CD4-positive, alpha-beta memory T cell (primary cell): ENCODE measurements at regions of chr12 and their contacts with region 1.

Region 1: GRCh38 chr12:47949441-47950308 is 13.7 kb upstream of the TMEM106C start:
- DNase-seq: peak in 4 of 5 donors; percentile 28 to 38 (median 34)
- H3K4me3 ChIP-seq: no peak overlapping the region
- H3K4me3 Mint-ChIP-seq: no peak overlapping the region
- H3K27ac ChIP-seq: no peak overlapping the region
- H3K27ac Mint-ChIP-seq: no peak overlapping the region
- H3K4me1 ChIP-seq: no peaks in the 10 kb centered on the region
- H3K4me1 Mint-ChIP-seq: no peaks in the 10 kb centered on the region
- H3K27me3 ChIP-seq: no peaks in the 10 kb centered on the region
- H3K27me3 Mint-ChIP-seq: peaks cover 3 to 6% of the 10 kb centered on the region in 2 donors

Region 2: DNA sequence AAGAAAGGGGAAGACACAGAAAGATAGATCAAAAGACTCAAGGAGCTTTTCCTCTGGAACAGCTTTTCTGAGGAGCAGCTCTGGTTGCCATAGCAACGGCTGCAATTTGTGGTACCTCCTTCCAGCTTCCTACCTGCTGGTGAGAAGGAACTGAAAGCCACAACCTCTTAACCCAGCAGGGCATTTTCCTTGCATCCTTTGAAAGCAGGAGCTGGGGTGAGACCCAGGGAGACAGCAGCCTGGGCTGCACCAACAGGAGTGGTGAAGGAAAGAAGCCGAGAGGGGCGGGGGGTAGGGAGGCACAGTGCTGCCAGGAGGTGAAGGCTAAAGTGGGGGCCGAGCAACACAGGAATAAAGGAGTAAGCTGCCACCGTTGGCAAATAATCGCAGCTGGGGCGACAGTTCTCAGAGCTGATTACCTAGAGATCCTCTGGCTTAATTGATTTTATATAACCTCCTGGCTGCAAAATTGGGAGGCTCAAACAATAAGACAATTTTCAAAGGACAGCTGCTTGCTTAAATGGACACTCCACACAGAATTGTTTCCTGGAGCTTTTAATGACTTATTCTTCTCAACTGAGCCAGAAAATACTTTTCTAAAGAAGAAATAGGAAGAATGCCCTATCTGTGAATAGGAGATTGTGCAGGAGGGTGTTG is 373.3 kb before region 1 on chr12:
- CTCF ChIA-PET with region 1: no interaction called
- POLR2A ChIA-PET with region 1: no interaction called
- intact Hi-C with region 1: no loop called
- DNase-seq: no peak
- H3K4me3 ChIP-seq: no peak overlapping the region
- H3K4me3 Mint-ChIP-seq: no peak overlapping the region
- H3K27ac ChIP-seq: no peak overlapping the region
- H3K27ac Mint-ChIP-seq: peak overlapping the region in 1 of 7 donors; percentile 29
- H3K4me1 ChIP-seq: no peaks in the 10 kb centered on the region
- H3K4me1 Mint-ChIP-seq: peaks cover 0 to 1% (median 0%) of the 10 kb centered on the region in 4 donors
- H3K27me3 ChIP-seq: no peaks in the 10 kb centered on the region
- H3K27me3 Mint-ChIP-seq: peaks cover 3 to 11% of the 10 kb centered on the region in 2 donors

Region 3: DNA sequence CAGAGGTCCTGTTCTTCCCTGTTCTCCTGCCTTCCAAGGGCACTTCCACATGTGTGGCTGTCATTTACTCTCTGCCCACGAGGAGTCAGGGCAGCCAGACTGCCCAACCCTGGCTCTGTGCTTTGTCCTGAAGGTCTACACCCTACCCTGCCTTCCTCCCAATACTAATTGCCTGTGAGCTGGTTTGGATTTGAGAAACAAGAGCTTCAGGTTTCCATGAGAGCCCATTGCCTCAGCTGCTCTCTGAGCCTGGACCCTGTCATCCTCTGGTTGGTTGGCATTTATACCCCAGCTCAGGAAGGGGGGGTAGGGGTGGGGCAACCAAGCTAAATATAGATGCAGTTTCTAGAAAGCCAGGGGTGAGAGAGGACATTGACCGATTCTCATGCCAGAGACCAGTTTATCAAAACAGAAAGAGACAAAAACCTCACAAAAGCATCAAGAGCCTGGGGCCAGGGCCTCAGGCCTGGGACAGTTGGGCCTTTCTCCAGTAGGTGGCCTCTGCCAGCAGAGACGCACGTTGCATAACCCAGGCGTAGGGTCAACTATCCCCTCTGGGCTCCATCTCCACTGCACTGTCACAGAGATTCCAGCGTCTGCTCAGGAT is 79.4 kb before region 1 on chr12:
- CTCF ChIA-PET with region 1: interaction called, 5 read pairs
- POLR2A ChIA-PET with region 1: no interaction called
- intact Hi-C with region 1: loop called (anchors 2 kb)
- DNase-seq: no peak
- H3K4me3 ChIP-seq: no peak overlapping the region
- H3K4me3 Mint-ChIP-seq: no peak overlapping the region
- H3K27ac ChIP-seq: no peak overlapping the region
- H3K27ac Mint-ChIP-seq: no peak overlapping the region
- H3K4me1 ChIP-seq: no peaks in the 10 kb centered on the region
- H3K4me1 Mint-ChIP-seq: no peaks in the 10 kb centered on the region
- H3K27me3 ChIP-seq: no peaks in the 10 kb centered on the region
- H3K27me3 Mint-ChIP-seq: no peaks in the 10 kb centered on the region

Region 4: GRCh38 chr12:47904713-47905310 is 44.9 kb before region 1 on chr12 and contains the start of gene VDR:
- CTCF ChIA-PET with region 1: interaction called, 5 read pairs
- POLR2A ChIA-PET with region 1: no interaction called
- intact Hi-C with region 1: loop called (anchors 2 kb)
- DNase-seq: peak; percentile 62 to 79 (median 67)
- H3K4me3 ChIP-seq: peak within 1 kb of the TSS; percentile 78 to 86
- H3K4me3 Mint-ChIP-seq: peak within 1 kb of the TSS; percentile 86 to 97 (median 90)
- H3K27ac ChIP-seq: peak within 1 kb of the TSS; percentile 36
- H3K27ac Mint-ChIP-seq: peak within 1 kb of the TSS; percentile 20 to 94 (median 74)
- H3K4me1 ChIP-seq: peaks cover 52% of the 10 kb centered on the region
- H3K4me1 Mint-ChIP-seq: peaks cover 29 to 67% (median 48%) of the 10 kb centered on the region in 4 donors
- H3K27me3 ChIP-seq: no peaks in the 10 kb centered on the region
- H3K27me3 Mint-ChIP-seq: peaks cover 0 to 1% of the 10 kb centered on the region in 2 donors
- total RNA-seq, gene VDR: 1.6 to 3.2 TPM